Endothelial cell of umbilical vein (primary cell): ENCODE measurements at regions of chr16 and their contacts with region 1.

Region 1: DNA sequence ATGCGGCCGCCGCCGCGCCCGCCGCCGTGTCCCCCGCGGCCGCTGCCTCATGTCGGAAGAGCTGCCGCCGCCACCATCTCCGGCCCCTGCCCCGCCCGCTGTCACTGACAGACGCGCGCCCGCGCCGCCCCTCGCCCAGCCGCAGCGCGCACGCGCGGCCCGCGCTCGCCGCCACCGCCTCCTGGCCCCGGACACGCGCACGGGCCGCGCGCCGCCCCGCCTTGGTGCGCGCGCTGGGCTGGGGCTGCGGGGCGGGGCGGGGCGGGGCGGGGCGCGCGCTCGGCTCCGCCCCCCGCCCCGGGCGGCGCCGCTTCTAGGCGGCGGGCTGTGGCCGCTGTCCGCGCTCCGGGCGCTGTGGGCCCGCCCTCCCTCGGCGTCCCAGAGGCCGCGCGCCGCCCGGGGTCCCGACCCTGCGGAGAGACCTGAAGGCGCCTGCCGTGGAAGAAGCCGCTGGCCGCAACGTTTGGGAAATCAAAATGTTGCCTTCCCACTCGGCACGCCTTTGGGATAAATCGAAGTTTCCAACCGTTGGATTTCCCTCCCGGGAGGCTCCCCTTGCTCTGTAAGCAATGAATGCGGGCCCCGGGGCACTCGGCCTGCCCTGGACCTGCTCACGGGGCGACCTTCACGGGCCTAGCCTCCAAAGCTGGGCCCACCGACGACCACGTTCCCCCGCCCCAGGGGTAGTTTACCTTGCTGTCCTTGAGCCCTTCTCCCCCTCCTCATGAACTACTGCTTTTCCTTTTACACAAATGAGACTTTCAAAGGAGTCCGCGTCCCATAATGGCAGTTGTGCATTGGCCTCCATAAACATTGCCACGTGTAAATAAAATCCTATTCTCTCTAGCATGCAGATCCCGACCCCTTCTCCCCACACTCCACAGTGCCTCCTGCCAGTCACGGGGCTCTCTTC is at the start of gene ADCY9:
- DNase-seq: peak; percentile 47
- H3K4me3 ChIP-seq: peak within 1 kb of the TSS; percentile 33 to 67 (median 42)
- H3K27ac ChIP-seq: peak within 1 kb of the TSS; percentile 15
- H3K4me1 ChIP-seq: peaks cover 17% of the 10 kb centered on the region
- H3K27me3 ChIP-seq: no peaks in the 10 kb centered on the region
- CTCF ChIP-seq: no peak
- POLR2A ChIP-seq: peak; percentile 47
- total RNA-seq, gene ADCY9: 13.1 and 14.0 TPM in 2 replicates

Region 2: GRCh38 chr16:4011225-4011939 is 105.2 kb before region 1 on chr16:
- CTCF ChIA-PET with region 1: interaction called, 3 read pairs
- POLR2A ChIA-PET with region 1: no interaction called
- dilution Hi-C with region 1: no loop called
- intact Hi-C with region 1: loop called (anchors 5 kb)
- DNase-seq: peak; percentile 65
- H3K4me3 ChIP-seq: no peak overlapping the region
- H3K27ac ChIP-seq: peak overlapping the region; percentile 19
- H3K4me1 ChIP-seq: peaks cover 32% of the 10 kb centered on the region
- H3K27me3 ChIP-seq: no peaks in the 10 kb centered on the region
- CTCF ChIP-seq: no peak
- POLR2A ChIP-seq: no peak

Region 3: DNA sequence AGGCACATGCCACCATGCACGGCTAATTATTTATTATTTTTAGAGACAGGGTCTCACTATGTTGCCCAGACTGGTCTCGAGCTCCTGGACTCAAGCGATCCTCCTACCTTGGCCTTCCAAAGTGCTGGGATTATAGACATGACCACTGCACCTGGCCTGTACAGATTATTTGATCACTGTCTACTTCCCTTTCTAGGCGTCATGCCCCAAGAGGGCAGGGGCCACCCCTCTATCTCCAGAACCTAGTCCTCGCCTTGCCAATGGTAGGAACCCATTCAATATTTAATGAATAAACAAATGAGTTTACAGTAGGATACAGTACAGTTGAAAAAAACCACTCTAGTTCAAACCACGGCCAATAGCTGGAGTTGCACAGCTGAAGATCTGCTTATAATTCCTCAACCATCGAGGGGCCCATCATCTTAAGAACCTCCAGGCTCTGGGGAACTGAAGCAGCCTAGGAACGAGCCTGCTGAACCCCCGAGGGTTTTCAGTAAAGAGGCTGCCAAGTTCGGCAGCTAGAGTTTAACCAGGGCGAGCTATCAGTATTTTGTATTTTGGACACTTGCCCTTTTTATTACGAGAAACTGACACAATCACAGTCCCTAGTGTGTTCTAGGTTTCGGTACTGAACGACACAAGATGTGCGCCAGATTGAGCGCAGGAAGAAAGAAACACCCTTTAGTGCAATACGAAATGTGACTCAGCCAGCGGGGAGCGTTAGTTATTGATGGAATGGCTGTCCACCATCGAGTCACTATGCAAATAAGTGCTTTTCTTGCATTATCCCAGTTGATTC is 15.0 kb before region 1 on chr16:
- CTCF ChIA-PET with region 1: interaction called, 13 read pairs
- POLR2A ChIA-PET with region 1: no interaction called
- dilution Hi-C with region 1: no loop called
- intact Hi-C with region 1: no loop called
- DNase-seq: no peak
- H3K4me3 ChIP-seq: no peak overlapping the region
- H3K27ac ChIP-seq: no peak overlapping the region
- H3K4me1 ChIP-seq: no peaks in the 10 kb centered on the region
- H3K27me3 ChIP-seq: no peaks in the 10 kb centered on the region
- CTCF ChIP-seq: no peak
- POLR2A ChIP-seq: no peak

Region 4: DNA sequence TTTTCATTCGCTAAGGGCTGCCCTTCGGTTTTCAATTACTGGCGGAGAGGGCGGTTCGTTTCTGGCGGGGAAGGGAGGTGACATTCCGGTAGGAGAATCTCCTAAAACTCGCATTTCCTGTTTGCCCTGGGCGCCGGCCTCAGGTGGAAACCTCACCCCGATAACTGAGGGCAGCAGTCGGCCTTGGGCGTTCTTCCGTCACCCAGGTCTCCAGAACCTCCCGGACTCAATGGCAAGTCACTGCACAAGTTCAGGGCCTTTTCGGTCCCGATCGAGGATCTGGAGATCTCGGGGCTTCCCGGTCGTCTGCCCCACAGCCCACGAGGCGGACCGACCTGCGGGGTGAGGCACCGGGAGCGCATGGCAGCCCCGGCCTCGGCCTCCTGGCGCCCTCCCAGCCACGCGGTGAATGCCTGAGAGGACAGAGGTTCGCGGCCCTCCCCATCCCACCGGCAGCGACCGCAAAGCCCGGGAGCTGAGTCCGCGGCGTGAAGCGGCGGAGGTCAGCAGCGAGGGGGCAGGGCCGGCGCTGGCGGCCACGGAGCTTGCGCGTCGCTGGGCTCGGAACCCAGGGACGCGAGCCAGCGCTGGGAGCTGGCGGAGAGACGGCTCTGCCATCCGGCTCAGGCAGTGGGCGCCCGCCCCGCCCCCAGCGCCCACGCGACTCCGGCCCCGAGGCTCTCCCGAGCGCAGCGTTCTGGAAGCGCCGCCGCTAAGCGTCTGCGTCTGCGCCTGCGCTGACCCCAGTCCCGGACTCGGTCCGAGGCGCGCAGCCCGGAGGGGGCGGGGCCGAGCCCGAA is 66.8 kb after region 1 on chr16:
- CTCF ChIA-PET with region 1: no interaction called
- POLR2A ChIA-PET with region 1: no interaction called
- dilution Hi-C with region 1: no loop called
- intact Hi-C with region 1: loop called (anchors 5 kb)
- DNase-seq: peak; percentile 96
- H3K4me3 ChIP-seq: peak overlapping the region; percentile 35 to 63 (median 55)
- H3K27ac ChIP-seq: peak overlapping the region; percentile 62
- H3K4me1 ChIP-seq: peaks cover 4% of the 10 kb centered on the region
- H3K27me3 ChIP-seq: no peaks in the 10 kb centered on the region
- CTCF ChIP-seq: no peak
- POLR2A ChIP-seq: no peak

Region 5: DNA sequence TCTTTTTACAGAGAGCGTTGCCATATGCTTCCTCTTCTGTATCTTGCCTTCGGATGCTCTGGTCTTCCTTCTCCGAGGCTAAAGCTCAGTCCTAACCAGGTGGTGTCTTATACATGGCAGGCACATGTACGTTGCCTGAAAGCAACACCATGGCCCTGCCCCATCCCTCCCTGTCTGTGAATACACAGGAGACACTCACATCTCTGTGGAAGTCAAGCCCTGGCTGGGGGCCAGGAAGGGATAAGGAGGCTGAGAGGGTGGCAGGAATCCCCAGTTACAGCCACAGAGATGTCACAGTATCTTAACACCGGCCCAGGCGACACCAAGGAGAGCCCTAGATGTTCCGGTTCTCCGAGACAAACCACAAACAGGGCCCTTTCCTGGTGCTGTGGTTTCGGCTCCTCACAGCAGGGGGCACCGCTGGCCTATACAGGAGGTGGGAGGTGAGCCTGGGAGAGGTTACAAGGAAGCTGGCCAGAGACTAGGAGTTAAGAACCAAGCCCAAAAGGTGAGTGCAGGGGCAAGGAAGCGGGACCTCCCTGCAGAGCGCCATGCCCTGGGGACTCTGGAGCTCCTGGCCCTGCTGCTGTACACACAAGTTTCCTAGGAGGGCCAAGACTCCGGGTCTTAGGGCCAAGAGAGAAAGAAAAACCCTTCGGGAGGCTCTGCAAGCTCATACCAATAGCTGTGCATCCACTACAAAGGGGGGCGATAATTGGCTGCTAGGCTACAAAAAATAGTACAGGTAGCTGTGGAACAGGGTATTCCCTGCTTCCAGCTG is 83.6 kb after region 1 on chr16:
- CTCF ChIA-PET with region 1: no interaction called
- POLR2A ChIA-PET with region 1: no interaction called
- dilution Hi-C with region 1: no loop called
- intact Hi-C with region 1: no loop called
- DNase-seq: peak; percentile 62
- H3K4me3 ChIP-seq: no peak overlapping the region
- H3K27ac ChIP-seq: no peak overlapping the region
- H3K4me1 ChIP-seq: no peaks in the 10 kb centered on the region
- H3K27me3 ChIP-seq: no peaks in the 10 kb centered on the region
- CTCF ChIP-seq: peak; percentile 46 to 83
- POLR2A ChIP-seq: no peak

Region 6: DNA sequence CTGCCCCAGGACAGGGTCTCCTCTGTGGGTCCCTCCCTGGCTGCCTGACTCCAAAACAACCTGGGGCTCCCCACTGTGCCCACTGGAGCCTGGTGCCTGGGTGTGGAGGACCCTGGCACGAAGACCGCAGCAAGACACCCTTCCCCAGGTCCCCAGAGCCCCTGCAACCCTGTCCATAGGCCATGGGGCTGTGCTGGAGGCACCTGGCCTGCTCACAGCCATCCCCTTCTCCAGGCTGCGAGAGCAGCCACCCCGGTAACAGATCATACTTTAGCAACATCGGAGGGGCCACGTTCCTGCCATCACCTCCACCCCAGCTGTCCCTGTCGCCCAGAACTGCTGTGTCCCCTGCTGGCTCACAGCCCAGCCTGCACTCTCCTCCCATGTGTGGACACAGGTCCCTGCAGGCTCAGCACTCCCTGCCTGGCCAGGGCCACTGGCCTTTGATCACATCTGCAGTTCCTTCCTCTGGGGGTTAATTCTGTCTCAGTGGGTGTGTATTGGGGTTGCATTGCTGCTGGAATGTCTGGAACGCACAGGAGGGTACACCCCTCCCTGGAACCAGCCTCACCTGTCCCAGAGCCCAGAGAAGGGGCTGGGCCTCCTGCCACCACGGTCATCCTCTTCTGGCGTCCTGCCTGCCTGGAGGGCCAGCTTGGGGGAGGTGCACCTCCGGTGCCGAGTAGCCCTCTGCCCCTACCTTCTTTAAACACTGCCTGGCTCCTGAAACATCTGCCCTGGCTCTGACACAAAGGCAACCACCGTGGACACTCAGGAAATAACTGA is 808.2 kb after region 1 on chr16:
- CTCF ChIA-PET with region 1: no interaction called
- POLR2A ChIA-PET with region 1: no interaction called
- dilution Hi-C with region 1: no loop called
- intact Hi-C with region 1: no loop called
- DNase-seq: no peak
- H3K4me3 ChIP-seq: no peak overlapping the region
- H3K27ac ChIP-seq: no peak overlapping the region
- H3K4me1 ChIP-seq: no peaks in the 10 kb centered on the region
- H3K27me3 ChIP-seq: no peaks in the 10 kb centered on the region
- CTCF ChIP-seq: no peak
- POLR2A ChIP-seq: no peak